ENCODE measurements at regions of chr3 and their contacts with region 1.

Region 1: GRCh38 chr3:11878840-11879239 is 32.2 kb upstream of the TAMM41 start:
- DNase-seq: no peak
- H3K4me3 ChIP-seq: no peak overlapping the region
- H3K27ac ChIP-seq: no peak overlapping the region
- H3K4me1 ChIP-seq: no peaks in the 10 kb centered on the region
- H3K27me3 ChIP-seq: no peaks in the 10 kb centered on the region

Region 2: GRCh38 chr3:10041034-10041433 is 1837.8 kb before region 1 on chr3:
- in situ Hi-C with region 1: loop called (anchors 10 kb)
- DNase-seq: no peak
- H3K4me3 ChIP-seq: no peak overlapping the region
- H3K27ac ChIP-seq: no peak overlapping the region
- H3K4me1 ChIP-seq: no peaks in the 10 kb centered on the region
- H3K27me3 ChIP-seq: no peaks in the 10 kb centered on the region

Measured in GM23248 (cell line).